GM12878 (cell line): ENCODE measurements at regions of chr17 and their contacts with region 1.

Region 1: DNA sequence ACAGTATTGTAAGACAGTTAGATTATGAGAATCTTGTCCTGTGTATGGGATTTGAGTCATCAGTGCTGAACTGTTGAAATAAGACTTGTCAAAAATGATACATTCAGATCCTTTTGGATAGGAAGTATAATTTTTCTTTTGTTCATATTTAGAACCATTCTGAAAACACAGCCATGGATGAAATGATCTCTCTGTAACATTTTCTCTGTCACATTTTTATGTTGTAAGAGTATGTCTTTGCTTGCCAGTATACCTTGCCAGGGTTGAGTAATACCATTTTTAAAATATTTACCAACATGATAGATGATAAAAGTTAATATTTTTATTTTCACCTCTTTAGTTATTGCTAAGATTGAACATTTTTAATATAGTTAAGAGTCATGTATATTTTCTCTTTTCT is 45.0 kb downstream of the NSRP1 start:
- DNase-seq: no peak
- ATAC-seq: no peak
- H3K4me3 ChIP-seq: no peak overlapping the region
- H3K27ac ChIP-seq: no peak overlapping the region
- H3K4me1 ChIP-seq: no peaks in the 10 kb centered on the region; the same call in 1 of the 2 replicates
- H3K27me3 ChIP-seq: no peaks in the 10 kb centered on the region
- CTCF ChIP-seq: no peak
- EP300 ChIP-seq: no peak
- POLR2A ChIP-seq: no peak
- RAD21 ChIP-seq: no peak

Region 2: DNA sequence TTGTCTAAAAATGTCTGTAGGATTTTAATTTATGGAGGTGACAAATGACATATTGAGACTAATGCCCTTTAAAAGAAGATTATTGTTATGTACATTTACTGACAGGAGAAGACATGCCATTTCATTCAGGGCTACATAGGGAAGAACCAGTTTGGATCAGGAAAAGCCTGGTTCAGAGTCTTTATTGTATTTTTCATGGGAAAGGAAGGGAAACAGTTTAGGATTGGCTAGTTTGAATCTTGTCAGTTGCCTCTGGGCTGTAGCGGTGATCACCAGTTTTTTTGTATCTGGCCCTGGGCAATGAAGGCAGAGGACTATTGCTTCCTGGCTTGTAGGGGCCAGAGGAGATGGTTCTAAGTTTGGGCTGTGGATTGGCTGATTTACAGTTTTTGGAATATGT is 13.2 kb before region 1 on chr17:
- CTCF ChIA-PET with region 1: interaction called, 5 read pairs
- POLR2A ChIA-PET with region 1: interaction called, 10 read pairs
- RAD21 ChIA-PET with region 1: interaction called, 3 read pairs
- SMC1A ChIA-PET with region 1: interaction called, 5 read pairs
- in situ Hi-C with region 1: no loop called
- intact Hi-C with region 1: no loop called
- DNase-seq: no peak
- ATAC-seq: no peak
- H3K4me3 ChIP-seq: no peak overlapping the region
- H3K27ac ChIP-seq: no peak overlapping the region; the same call in 1 of the 2 replicates
- H3K4me1 ChIP-seq: no peaks in the 10 kb centered on the region; the same call in 1 of the 2 replicates
- H3K27me3 ChIP-seq: no peaks in the 10 kb centered on the region
- CTCF ChIP-seq: no peak
- EP300 ChIP-seq: no peak
- POLR2A ChIP-seq: no peak
- RAD21 ChIP-seq: no peak